CD8-positive, alpha-beta T cell (primary cell): ENCODE measurements at regions of chr9 and their contacts with region 1.

Region 1: GRCh38 chr9:123349691-123350480 is 6.1 kb upstream of the CRB2 start:
- DNase-seq: peak; percentile 35 to 79 (median 66)
- ATAC-seq: peak; percentile 86
- H3K4me3 ChIP-seq: no peak overlapping the region
- H3K4me3 Mint-ChIP-seq: no peak overlapping the region
- H3K27ac ChIP-seq: no peak overlapping the region
- H3K27ac Mint-ChIP-seq: no peak overlapping the region
- H3K4me1 ChIP-seq: peaks cover 4% of the 10 kb centered on the region
- H3K4me1 Mint-ChIP-seq: peaks cover 3% of the 10 kb centered on the region
- H3K27me3 ChIP-seq: peaks cover 0 to 4% of the 10 kb centered on the region in 2 experiments
- H3K27me3 Mint-ChIP-seq: peaks cover 11% of the 10 kb centered on the region
- CTCF ChIP-seq: peak; percentile 82

Region 2: GRCh38 chr9:121852651-121853616 is 1497.0 kb before region 1 on chr9:
- CTCF ChIA-PET with region 1: no interaction called
- POLR2A ChIA-PET with region 1: no interaction called
- intact Hi-C with region 1: no loop called
- DNase-seq: no peak
- ATAC-seq: no peak
- H3K4me3 ChIP-seq: no peak overlapping the region
- H3K4me3 Mint-ChIP-seq: no peak overlapping the region
- H3K27ac ChIP-seq: no peak overlapping the region
- H3K27ac Mint-ChIP-seq: no peak overlapping the region
- H3K4me1 ChIP-seq: no peaks in the 10 kb centered on the region
- H3K4me1 Mint-ChIP-seq: no peaks in the 10 kb centered on the region
- H3K27me3 ChIP-seq: no peaks in the 10 kb centered on the region
- H3K27me3 Mint-ChIP-seq: no peaks in the 10 kb centered on the region
- CTCF ChIP-seq: no peak

Region 3: GRCh38 chr9:122464633-122465567 is 885.0 kb before region 1 on chr9:
- CTCF ChIA-PET with region 1: interaction called, 4 read pairs
- POLR2A ChIA-PET with region 1: no interaction called
- intact Hi-C with region 1: loop called in 1 of 2 experiments (anchors 10 kb)
- DNase-seq: peak; percentile 37 to 79 (median 64)
- ATAC-seq: peak; percentile 78
- H3K4me3 ChIP-seq: peak overlapping the region; percentile 47 to 49
- H3K4me3 Mint-ChIP-seq: peak overlapping the region; percentile 89
- H3K27ac ChIP-seq: peak overlapping the region; percentile 39 to 58
- H3K27ac Mint-ChIP-seq: peak overlapping the region; percentile 87
- H3K4me1 ChIP-seq: peaks cover 5% of the 10 kb centered on the region
- H3K4me1 Mint-ChIP-seq: peaks cover 10% of the 10 kb centered on the region
- H3K27me3 ChIP-seq: no peaks in the 10 kb centered on the region
- H3K27me3 Mint-ChIP-seq: peaks cover 28% of the 10 kb centered on the region
- CTCF ChIP-seq: peak; percentile 81

Region 4: DNA sequence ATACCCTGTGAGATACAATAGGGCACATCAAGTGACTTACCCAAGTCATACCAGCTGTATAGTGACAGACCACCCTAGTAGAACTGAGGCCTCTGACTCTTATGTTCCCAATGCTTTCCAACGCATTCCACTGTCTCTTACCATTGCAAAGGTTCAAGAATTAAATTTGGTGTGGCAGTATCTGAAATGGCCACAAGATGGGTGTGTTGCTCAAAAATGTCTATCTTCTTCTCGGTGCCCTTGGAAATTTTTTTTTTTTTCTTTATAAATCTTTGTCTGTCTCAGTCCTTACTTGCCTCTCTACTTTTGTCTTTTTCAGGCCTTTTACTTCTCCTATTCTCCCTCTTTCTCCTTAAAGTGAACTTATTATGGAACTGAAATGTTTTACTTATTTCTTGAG is 268.1 kb before region 1 on chr9:
- CTCF ChIA-PET with region 1: interaction called, 62 read pairs
- POLR2A ChIA-PET with region 1: no interaction called
- intact Hi-C with region 1: loop called (anchors 1 kb)
- DNase-seq: peak in 2 of 9 experiments; percentile 41 to 50
- ATAC-seq: no peak
- H3K4me3 ChIP-seq: no peak overlapping the region
- H3K4me3 Mint-ChIP-seq: no peak overlapping the region
- H3K27ac ChIP-seq: no peak overlapping the region
- H3K27ac Mint-ChIP-seq: no peak overlapping the region
- H3K4me1 ChIP-seq: no peaks in the 10 kb centered on the region
- H3K4me1 Mint-ChIP-seq: no peaks in the 10 kb centered on the region
- H3K27me3 ChIP-seq: no peaks in the 10 kb centered on the region
- H3K27me3 Mint-ChIP-seq: no peaks in the 10 kb centered on the region
- CTCF ChIP-seq: peak; percentile 60

Region 5: GRCh38 chr9:123102375-123103110 is 247.3 kb before region 1 on chr9:
- CTCF ChIA-PET with region 1: interaction called, 33 read pairs
- POLR2A ChIA-PET with region 1: interaction called, 3 read pairs
- intact Hi-C with region 1: no loop called
- DNase-seq: no peak
- ATAC-seq: no peak
- H3K4me3 ChIP-seq: no peak overlapping the region
- H3K4me3 Mint-ChIP-seq: no peak overlapping the region
- H3K27ac ChIP-seq: no peak overlapping the region
- H3K27ac Mint-ChIP-seq: peak overlapping the region; percentile 43
- H3K4me1 ChIP-seq: no peaks in the 10 kb centered on the region
- H3K4me1 Mint-ChIP-seq: no peaks in the 10 kb centered on the region
- H3K27me3 ChIP-seq: no peaks in the 10 kb centered on the region
- H3K27me3 Mint-ChIP-seq: no peaks in the 10 kb centered on the region
- CTCF ChIP-seq: no peak

Region 6: DNA sequence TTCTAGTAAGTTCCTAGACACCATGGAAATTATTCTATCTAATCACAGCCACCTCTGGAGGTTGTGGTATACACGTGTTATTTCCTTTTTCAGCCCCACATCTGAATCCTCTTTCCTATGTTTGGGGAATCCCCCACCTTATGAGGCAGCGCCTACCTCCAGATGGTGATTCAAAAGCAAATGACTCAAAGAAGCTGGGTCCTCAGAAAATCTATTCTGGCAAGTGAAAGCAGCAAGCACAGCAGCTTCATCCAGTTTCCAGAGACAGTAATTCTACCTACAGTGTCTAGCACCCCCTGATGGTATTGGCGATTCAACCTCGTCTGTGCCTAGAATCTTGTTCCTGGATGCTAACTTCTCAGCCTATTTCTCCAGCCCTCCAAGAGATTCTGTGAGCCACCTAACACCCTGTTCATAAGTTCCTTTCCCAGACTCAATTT is 124.5 kb before region 1 on chr9:
- CTCF ChIA-PET with region 1: interaction called, 4 read pairs
- POLR2A ChIA-PET with region 1: no interaction called
- intact Hi-C with region 1: loop called in 1 of 2 experiments (anchors 5 kb)
- DNase-seq: peak in 8 of 9 experiments; percentile 24 to 76 (median 48)
- ATAC-seq: peak; percentile 88
- H3K4me3 ChIP-seq: no peak overlapping the region
- H3K4me3 Mint-ChIP-seq: no peak overlapping the region
- H3K27ac ChIP-seq: no peak overlapping the region
- H3K27ac Mint-ChIP-seq: peak overlapping the region; percentile 8
- H3K4me1 ChIP-seq: peaks cover 14% of the 10 kb centered on the region
- H3K4me1 Mint-ChIP-seq: peaks cover 21% of the 10 kb centered on the region
- H3K27me3 ChIP-seq: no peaks in the 10 kb centered on the region
- H3K27me3 Mint-ChIP-seq: no peaks in the 10 kb centered on the region
- CTCF ChIP-seq: peak; percentile 44

Region 7: DNA sequence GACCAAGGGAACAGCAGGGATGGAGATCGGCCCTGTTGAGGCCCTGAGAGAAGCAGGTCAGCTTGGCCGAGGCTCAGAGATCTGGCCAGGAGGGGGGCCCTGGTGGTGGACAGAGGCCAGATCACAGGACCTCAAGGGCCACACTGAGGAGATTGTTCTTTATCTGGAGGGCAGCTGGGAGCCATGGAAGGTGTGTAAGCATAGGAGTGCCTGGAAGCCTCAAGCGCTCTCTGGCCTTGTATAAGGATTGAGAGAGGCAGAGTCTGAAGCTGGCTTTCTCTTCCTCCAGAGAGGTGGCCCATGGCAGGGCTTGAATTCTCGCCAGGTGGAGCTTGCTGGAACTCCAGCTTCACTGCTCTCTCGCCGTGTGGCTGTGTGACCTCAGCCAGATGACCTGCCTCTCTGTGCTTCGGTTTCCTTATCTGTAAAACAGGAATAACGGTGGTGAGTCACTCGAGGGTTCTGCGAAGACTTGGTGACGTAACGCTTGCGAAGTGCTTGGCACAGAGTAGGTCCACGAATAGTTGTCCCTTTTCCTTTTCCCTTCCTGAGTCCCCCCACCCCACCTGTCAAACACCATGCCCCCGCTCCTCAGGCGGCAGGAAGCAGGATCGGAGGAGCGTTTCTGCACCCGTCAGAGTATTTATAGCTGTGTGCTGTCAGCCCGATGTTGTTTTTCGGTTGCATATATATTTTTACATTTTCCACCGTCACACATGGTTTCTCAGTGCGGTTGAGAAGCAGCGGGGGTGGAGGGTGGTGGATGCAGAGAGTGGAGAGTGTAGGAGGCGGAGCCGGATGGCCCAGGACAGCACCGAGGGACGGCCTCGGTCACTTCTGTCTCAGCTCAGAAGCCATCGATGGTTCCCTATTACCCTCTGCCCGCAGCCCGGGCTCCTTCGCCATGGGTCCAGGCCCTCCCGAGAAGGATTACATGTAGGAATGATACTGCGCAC is 10.9 kb before region 1 on chr9:
- CTCF ChIA-PET with region 1: interaction called, 19 read pairs
- POLR2A ChIA-PET with region 1: interaction called, 3 read pairs
- intact Hi-C with region 1: no loop called
- DNase-seq: peak; percentile 8 to 76 (median 58)
- ATAC-seq: peak; percentile 72
- H3K4me3 ChIP-seq: peak overlapping the region; percentile 53 to 65
- H3K4me3 Mint-ChIP-seq: peak overlapping the region; percentile 89
- H3K27ac ChIP-seq: peak overlapping the region; percentile 10 to 46
- H3K27ac Mint-ChIP-seq: peak overlapping the region; percentile 91
- H3K4me1 ChIP-seq: peaks cover 25% of the 10 kb centered on the region
- H3K4me1 Mint-ChIP-seq: peaks cover 28% of the 10 kb centered on the region
- H3K27me3 ChIP-seq: no peaks in the 10 kb centered on the region
- H3K27me3 Mint-ChIP-seq: no peaks in the 10 kb centered on the region
- CTCF ChIP-seq: no peak

Region 8: GRCh38 chr9:123389070-123389469 is 39.2 kb after region 1 on chr9:
- CTCF ChIA-PET with region 1: interaction called, 7 read pairs
- POLR2A ChIA-PET with region 1: no interaction called
- intact Hi-C with region 1: loop called (anchors 1 kb)
- DNase-seq: peak in 1 of 9 experiments; percentile 5
- ATAC-seq: no peak
- H3K4me3 ChIP-seq: no peak overlapping the region
- H3K4me3 Mint-ChIP-seq: no peak overlapping the region
- H3K27ac ChIP-seq: no peak overlapping the region
- H3K27ac Mint-ChIP-seq: no peak overlapping the region
- H3K4me1 ChIP-seq: no peaks in the 10 kb centered on the region
- H3K4me1 Mint-ChIP-seq: peaks cover 3% of the 10 kb centered on the region
- H3K27me3 ChIP-seq: no peaks in the 10 kb centered on the region
- H3K27me3 Mint-ChIP-seq: no peaks in the 10 kb centered on the region
- CTCF ChIP-seq: no peak